CD4-positive, alpha-beta T cell (primary cell): ENCODE measurements at regions of chr1 and their contacts with region 1.

Region 1: DNA sequence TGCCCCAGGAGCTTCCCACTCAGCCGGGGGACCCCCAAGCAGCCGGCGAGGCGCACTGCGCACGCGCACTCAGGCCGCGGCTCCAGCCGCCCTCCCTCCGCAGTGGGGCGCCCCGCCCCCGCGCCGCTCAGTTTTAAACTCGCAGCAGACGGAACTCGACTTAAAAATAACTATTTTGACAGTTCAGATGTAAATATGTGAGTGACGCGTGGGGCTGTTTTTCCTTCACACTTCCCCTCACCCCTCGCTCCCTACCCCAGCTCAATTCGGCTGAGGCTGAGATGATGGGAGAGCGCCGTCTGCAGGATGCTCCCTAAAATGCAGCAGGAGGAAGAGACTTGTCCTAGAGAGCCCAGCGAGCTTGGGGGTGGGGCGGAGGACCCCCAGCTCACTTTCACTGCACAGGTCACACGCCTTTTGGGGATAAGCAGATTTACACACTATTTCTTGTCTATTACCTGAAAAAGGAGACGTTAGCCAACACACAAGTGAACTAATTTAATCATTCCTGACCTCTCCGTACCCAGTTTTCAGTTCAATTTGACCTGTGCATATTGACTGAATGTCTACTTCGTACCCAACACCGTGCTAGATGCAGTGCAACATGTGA is 8.9 kb upstream of the LEMD1 start:
- DNase-seq: peak; percentile 21 to 71 (median 48)
- ATAC-seq: peak; percentile 90
- H3K4me3 ChIP-seq: peak overlapping the region; percentile 43
- H3K4me3 Mint-ChIP-seq: peak overlapping the region; percentile 85
- H3K27ac ChIP-seq: no peak overlapping the region
- H3K27ac Mint-ChIP-seq: no peak overlapping the region
- H3K4me1 ChIP-seq: peaks cover 11% of the 10 kb centered on the region
- H3K4me1 Mint-ChIP-seq: peaks cover 7% of the 10 kb centered on the region
- H3K27me3 ChIP-seq: peaks cover 0 to 8% of the 10 kb centered on the region in 2 experiments
- H3K27me3 Mint-ChIP-seq: peaks cover 35% of the 10 kb centered on the region
- CTCF ChIP-seq: peak; percentile 60

Region 2: DNA sequence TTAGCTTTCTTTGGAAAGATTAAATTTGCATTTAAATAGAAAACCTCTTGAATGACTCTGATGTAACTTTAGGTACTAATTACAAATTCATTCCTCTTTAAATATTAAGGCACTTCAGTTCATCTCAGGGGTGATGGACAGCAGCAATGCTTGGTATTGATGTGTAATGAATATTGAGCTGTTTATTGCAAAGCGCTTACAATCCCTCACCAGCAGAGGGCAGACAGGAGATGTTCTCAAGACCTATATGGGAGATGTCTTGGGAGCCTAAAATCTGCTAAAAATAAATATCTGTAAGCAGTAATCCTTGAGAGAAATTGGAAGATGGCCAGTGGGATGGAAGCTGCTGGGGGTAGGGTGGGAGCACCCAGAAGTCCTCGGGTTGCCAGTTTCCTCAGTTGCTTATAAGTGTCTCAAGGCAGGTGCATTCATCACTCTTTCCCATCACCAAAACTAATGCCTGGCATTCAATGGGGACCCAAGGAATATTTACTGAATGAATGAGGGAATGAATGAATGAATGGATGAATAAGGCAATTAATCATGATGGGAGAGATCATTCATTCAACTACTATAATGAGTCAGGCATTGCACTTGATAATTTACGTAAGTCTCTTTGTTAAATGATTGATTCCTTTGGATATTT is 76.4 kb before region 1 on chr1:
- CTCF ChIA-PET with region 1: no interaction called
- POLR2A ChIA-PET with region 1: interaction called, 3 read pairs
- intact Hi-C with region 1: loop called in 1 of 2 experiments (anchors 5 kb)
- DNase-seq: peak; percentile 34 to 82 (median 52)
- ATAC-seq: peak; percentile 83
- H3K4me3 ChIP-seq: no peak overlapping the region
- H3K4me3 Mint-ChIP-seq: no peak overlapping the region
- H3K27ac ChIP-seq: no peak overlapping the region
- H3K27ac Mint-ChIP-seq: no peak overlapping the region
- H3K4me1 ChIP-seq: no peaks in the 10 kb centered on the region
- H3K4me1 Mint-ChIP-seq: no peaks in the 10 kb centered on the region
- H3K27me3 ChIP-seq: peaks cover 6 to 11% of the 10 kb centered on the region in 2 experiments
- H3K27me3 Mint-ChIP-seq: peaks cover 16% of the 10 kb centered on the region
- CTCF ChIP-seq: peak; percentile 95